Heart right ventricle (tissue), 16 donors: ENCODE measurements at regions of chr16 and their contacts with region 1.

Region 1: DNA sequence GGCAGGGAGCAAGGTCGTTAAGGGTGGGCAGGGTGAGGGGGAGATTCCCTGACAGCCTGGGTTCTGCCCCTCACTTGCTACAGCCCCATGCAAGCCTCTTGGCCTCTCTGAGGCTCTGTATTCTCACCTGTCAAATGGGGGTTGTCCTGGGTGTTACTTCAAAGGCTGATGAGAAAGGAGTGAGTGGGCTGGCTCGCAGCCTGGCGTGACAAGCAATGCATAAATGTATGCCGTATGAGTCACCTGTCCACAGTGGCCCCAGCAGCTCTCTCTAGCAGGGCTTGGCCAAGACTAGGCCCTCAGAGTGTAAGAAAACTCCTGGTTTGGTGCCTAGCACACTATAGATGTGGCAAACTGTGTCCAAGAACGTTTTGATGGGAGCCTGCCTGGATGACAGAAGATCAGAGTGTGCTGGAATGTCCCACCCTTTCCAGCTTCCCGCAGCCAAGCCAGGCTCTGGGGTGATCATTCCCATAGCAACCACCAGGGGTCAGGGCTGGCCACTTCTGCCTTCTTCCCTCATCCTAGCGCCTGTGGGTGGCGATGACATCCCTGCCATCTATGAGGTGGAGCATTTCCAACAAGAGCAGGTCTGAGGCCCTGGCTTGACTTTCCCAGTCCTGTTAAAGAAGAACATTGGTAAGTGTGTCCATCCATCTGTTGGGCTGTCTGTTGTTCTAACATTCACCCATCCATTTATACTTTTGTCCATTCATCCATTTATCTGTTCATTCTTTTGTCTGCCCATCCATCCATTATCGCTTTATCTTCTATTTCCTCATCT is 37.2 kb upstream of the ADGRG1 start:
- DNase-seq: peak; percentile 65 to 74
- ATAC-seq: peak; percentile 86 to 95 (median 92)
- H3K4me3 ChIP-seq: no peak overlapping the region
- H3K27ac ChIP-seq: peak overlapping the region in 1 of 10 donors; percentile 53
- H3K4me1 ChIP-seq: peaks cover 0 to 33% (median 4%) of the 10 kb centered on the region in 9 donors
- H3K27me3 ChIP-seq: peaks cover 0 to 4% (median 0%) of the 10 kb centered on the region in 7 donors
- CTCF ChIP-seq: peak; percentile 80 to 95 (median 91)

Region 2: DNA sequence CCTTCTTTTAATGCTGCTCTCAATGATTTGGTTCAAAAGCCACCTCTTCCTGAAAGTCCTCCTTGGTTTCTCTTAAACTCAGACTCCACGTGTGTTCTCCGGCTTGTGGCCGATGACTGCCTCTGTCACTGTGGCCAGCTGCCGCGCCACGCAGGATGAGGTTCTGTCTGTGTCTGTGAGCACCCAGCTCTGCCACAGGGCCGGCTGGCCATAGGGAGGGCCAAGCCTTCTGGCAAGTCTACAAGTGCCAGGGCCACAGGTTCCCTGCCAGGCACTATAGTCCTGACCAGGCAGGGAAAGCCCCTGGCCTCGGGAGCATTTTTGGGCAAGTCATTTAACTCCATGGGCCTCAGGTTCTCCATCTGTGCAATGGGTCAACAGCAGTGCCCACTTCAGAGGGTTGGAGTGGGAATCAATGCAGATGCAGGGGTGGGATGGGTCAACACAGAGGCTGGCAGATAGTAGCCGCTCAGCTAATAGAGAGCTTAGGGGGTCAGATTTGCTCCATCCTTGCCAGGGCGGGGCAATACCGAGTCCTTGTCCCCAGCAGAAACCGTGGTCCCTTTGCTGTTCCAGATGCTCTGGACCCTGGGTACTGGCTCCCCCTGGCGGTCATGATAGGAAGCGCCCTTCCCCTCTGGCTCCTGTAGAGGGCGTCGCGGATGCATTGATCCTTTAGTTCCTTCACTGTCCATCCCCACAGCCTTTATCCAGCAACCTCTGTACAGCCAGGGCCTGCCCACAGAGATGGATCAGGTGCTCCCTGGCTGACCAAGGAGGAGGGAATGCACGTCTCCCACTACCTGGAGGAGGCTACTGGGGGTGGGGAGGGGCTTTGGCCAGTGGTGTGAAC is 57.5 kb after region 1 on chr16:
- intact Hi-C with region 1: loop called in 9 of 10 experiments (anchors 2 to 5 kb)
- DNase-seq: peak; percentile 73 to 79
- ATAC-seq: peak; percentile 32 to 50 (median 45)
- H3K4me3 ChIP-seq: peak overlapping the region in 1 of 10 donors; percentile 4
- H3K27ac ChIP-seq: peak overlapping the region; percentile 78 to 93 (median 86)
- H3K4me1 ChIP-seq: peaks cover 9 to 58% (median 39%) of the 10 kb centered on the region in 9 donors
- H3K27me3 ChIP-seq: peaks cover 0 to 14% (median 0%) of the 10 kb centered on the region in 7 donors
- CTCF ChIP-seq: peak; percentile 99 to 100 (median 100)

Region 3: DNA sequence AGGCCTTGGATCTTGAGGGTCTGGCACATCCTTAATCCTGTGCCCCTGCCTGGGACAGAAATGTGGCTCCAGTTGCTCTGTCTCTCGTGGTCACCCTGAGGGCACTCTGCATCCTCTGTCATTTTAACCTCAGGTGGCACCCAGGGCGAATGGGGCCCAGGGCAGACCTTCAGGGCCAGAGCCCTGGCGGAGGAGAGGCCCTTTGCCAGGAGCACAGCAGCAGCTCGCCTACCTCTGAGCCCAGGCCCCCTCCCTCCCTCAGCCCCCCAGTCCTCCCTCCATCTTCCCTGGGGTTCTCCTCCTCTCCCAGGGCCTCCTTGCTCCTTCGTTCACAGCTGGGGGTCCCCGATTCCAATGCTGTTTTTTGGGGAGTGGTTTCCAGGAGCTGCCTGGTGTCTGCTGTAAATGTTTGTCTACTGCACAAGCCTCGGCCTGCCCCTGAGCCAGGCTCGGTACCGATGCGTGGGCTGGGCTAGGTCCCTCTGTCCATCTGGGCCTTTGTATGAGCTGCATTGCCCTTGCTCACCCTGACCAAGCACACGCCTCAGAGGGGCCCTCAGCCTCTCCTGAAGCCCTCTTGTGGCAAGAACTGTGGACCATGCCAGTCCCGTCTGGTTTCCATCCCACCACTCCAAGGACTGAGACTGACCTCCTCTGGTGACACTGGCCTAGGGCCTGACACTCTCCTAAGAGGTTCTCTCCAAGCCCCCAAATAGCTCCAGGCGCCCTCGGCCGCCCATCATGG is 72.8 kb after region 1 on chr16:
- intact Hi-C with region 1: no loop called
- DNase-seq: no peak
- ATAC-seq: no peak
- H3K4me3 ChIP-seq: no peak overlapping the region
- H3K27ac ChIP-seq: no peak overlapping the region
- H3K4me1 ChIP-seq: peaks cover 0 to 21% (median 0%) of the 10 kb centered on the region in 9 donors
- H3K27me3 ChIP-seq: peaks cover 0 to 14% (median 0%) of the 10 kb centered on the region in 7 donors
- CTCF ChIP-seq: no peak

Region 4: DNA sequence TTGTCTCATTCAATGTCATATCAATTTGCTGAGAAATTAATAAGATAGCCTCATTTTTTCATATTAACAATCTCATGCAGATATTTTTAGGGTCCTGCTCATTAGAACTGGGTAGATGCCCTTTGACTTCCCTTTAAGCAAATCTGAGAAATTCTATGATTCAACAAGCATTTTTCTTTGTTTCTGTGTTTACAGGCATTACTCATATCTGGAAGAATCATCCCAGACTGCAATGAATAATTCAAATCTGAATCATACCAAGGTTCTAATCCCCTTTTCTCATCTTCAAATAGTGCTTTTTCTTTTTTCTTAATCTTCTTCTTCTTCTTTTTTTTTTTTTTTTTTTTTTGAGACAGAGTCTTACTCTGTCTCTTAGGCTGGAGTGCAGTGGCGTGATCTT is 280.2 kb after region 1 on chr16:
- intact Hi-C with region 1: loop called in 3 of 10 experiments (anchors 10 kb)
- DNase-seq: no peak
- ATAC-seq: no peak
- H3K4me3 ChIP-seq: no peak overlapping the region
- H3K27ac ChIP-seq: no peak overlapping the region
- H3K4me1 ChIP-seq: peaks cover 0 to 14% (median 0%) of the 10 kb centered on the region in 9 donors
- H3K27me3 ChIP-seq: peaks cover 0 to 23% (median 16%) of the 10 kb centered on the region in 7 donors
- CTCF ChIP-seq: no peak